ENCODE measurements at regions of chr7 and their contacts with region 1.

Region 1: GRCh38 chr7:94648740-94649139 is 7.2 kb downstream of the SGCE start:
- DNase-seq: no peak
- ATAC-seq: no peak
- H3K4me3 ChIP-seq: no peak overlapping the region
- H3K4me3 Mint-ChIP-seq: no peak overlapping the region
- H3K27ac ChIP-seq: no peak overlapping the region
- H3K27ac Mint-ChIP-seq: no peak overlapping the region
- H3K4me1 ChIP-seq: no peaks in the 10 kb centered on the region
- H3K4me1 Mint-ChIP-seq: no peaks in the 10 kb centered on the region
- H3K27me3 ChIP-seq: peaks cover 2 to 8% of the 10 kb centered on the region in 2 experiments
- H3K27me3 Mint-ChIP-seq: peaks cover 59 to 60% of the 10 kb centered on the region in 2 donors

Region 2: GRCh38 chr7:94289071-94289470 is 359.7 kb before region 1 on chr7:
- CTCF ChIA-PET with region 1: no interaction called
- POLR2A ChIA-PET with region 1: no interaction called
- DNase-seq: no peak
- ATAC-seq: no peak
- H3K4me3 ChIP-seq: no peak overlapping the region
- H3K4me3 Mint-ChIP-seq: no peak overlapping the region
- H3K27ac ChIP-seq: no peak overlapping the region
- H3K27ac Mint-ChIP-seq: no peak overlapping the region
- H3K4me1 ChIP-seq: no peaks in the 10 kb centered on the region
- H3K4me1 Mint-ChIP-seq: no peaks in the 10 kb centered on the region
- H3K27me3 ChIP-seq: no peaks in the 10 kb centered on the region
- H3K27me3 Mint-ChIP-seq: peaks cover 0 to 18% of the 10 kb centered on the region in 2 donors

Region 3: GRCh38 chr7:94348142-94348541 is 300.6 kb before region 1 on chr7:
- CTCF ChIA-PET with region 1: no interaction called
- POLR2A ChIA-PET with region 1: no interaction called
- DNase-seq: no peak
- ATAC-seq: no peak
- H3K4me3 ChIP-seq: no peak overlapping the region
- H3K4me3 Mint-ChIP-seq: no peak overlapping the region
- H3K27ac ChIP-seq: no peak overlapping the region
- H3K27ac Mint-ChIP-seq: no peak overlapping the region
- H3K4me1 ChIP-seq: no peaks in the 10 kb centered on the region
- H3K4me1 Mint-ChIP-seq: no peaks in the 10 kb centered on the region
- H3K27me3 ChIP-seq: no peaks in the 10 kb centered on the region
- H3K27me3 Mint-ChIP-seq: peaks cover 2 to 8% of the 10 kb centered on the region in 2 donors

Region 4: DNA sequence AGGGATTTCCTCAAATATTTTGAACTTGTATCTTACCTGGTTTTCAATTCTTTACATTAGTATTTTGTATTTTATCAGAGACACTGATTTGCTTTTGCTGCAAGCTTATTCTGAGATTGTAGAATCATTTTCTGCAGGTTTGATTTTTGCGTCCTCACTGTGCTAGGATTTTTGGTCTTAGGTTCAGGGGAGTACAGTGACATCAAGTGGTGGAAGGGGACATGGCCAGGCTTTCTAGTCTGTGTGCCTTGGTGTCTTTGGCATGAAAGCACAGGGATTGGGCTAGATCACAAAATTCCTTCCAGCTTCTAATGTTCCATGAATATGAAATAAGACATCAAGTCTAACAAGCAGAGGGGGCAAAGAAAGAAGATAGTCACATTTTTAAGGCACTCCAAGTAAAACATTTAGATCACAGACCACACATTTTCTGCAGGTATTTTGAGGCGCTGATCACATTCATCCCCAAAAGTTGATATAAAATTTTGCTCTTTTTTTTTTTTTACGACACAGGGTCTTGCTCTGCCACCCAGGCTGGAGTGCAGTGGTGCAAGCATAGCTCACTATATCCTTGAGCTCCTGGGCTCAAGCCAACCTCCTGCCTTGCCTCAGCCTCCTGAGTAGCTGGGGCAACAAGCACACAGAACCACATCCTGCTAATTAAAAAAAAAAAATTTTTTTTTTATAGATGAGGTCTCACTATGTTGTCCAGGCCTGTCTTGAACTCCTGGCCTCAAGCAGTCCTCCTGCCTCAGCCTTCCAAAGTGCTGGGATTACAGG is 551.2 kb after region 1 on chr7:
- CTCF ChIA-PET with region 1: interaction called in 1 of 2 experiments, 10 read pairs
- POLR2A ChIA-PET with region 1: no interaction called
- DNase-seq: peak in 1 of 35 experiments; percentile 1
- ATAC-seq: no peak
- H3K4me3 ChIP-seq: no peak overlapping the region
- H3K4me3 Mint-ChIP-seq: no peak overlapping the region
- H3K27ac ChIP-seq: no peak overlapping the region
- H3K27ac Mint-ChIP-seq: no peak overlapping the region
- H3K4me1 ChIP-seq: no peaks in the 10 kb centered on the region
- H3K4me1 Mint-ChIP-seq: no peaks in the 10 kb centered on the region
- H3K27me3 ChIP-seq: no peaks in the 10 kb centered on the region
- H3K27me3 Mint-ChIP-seq: peaks cover 0 to 5% of the 10 kb centered on the region in 2 donors